ENCODE measurements at regions of chr16 and their contacts with region 1.

Region 1: GRCh38 chr16:17556276-17557052 is 85.7 kb upstream of the XYLT1 start:
- DNase-seq: no peak
- H3K4me3 ChIP-seq: no peak overlapping the region
- H3K27me3 ChIP-seq: no peaks in the 10 kb centered on the region
- CTCF ChIP-seq: peak; percentile 73

Region 2: GRCh38 chr16:17476414-17477270 is 79.8 kb before region 1 on chr16:
- CTCF ChIA-PET with region 1: interaction called, 14 read pairs
- POLR2A ChIA-PET with region 1: no interaction called
- DNase-seq: no peak
- H3K4me3 ChIP-seq: no peak overlapping the region
- H3K27me3 ChIP-seq: peaks cover 2% of the 10 kb centered on the region; the same call in 1 of the 2 replicates
- CTCF ChIP-seq: peak; percentile 72

Region 3: DNA sequence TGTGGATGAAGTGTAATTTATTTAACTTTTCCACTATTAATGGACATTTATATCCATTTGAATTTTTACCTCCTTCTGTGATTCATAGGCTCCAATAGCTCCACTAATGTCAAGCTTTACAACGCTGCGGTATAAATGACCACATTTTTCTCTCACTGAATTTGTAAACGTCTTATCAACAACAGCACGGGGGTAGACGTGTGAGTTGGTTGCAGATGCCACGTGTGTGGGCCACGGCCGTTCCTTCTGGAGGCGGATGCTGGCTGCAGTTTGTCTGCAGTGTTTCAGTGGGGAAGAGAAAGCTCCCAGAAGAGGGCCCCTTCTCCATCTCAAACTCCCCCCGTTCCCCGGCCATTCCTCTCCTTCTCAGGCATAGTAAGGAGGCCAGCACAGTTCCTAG is 17.5 kb before region 1 on chr16:
- CTCF ChIA-PET with region 1: interaction called, 17 read pairs
- POLR2A ChIA-PET with region 1: no interaction called
- DNase-seq: no peak
- H3K4me3 ChIP-seq: no peak overlapping the region
- H3K27me3 ChIP-seq: no peaks in the 10 kb centered on the region
- CTCF ChIP-seq: no peak

Region 4: DNA sequence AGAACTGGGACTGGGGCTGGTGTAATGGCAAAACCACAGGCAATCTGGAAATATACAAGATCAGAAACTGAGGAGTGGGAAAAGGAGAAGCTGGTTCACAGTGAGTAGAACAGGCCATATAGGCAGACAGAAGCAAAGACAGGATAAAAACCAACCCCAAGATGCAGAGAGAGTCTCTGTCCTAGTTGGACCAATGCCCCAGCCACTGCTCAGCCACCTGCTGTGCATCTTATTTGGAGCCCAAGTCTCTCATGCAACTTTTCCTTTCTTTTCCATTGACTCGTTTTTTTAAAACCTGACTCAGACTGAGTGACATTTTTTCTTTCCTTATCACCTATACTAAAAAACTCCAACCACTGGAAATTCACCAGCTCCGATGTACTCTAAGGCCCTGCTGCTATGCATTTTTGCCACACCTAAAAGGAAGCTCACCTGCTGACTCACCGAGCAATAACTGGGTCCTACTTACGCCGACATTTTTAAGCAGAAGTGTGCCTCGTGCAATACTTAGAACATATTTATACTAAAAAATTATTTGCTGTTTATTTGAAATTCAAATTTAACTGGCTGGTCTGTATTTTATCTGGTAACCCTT is 15.1 kb after region 1 on chr16:
- CTCF ChIA-PET with region 1: interaction called, 15 read pairs
- POLR2A ChIA-PET with region 1: no interaction called
- DNase-seq: no peak
- H3K4me3 ChIP-seq: no peak overlapping the region
- H3K27me3 ChIP-seq: 0 out of 2 replicates have a peak, but pooled peaks cover 1% of the 10 kb centered on the region
- CTCF ChIP-seq: no peak

Region 5: GRCh38 chr16:17578921-17579874 is 22.7 kb after region 1 on chr16:
- CTCF ChIA-PET with region 1: interaction called, 43 read pairs
- POLR2A ChIA-PET with region 1: no interaction called
- DNase-seq: peak; percentile 40
- H3K4me3 ChIP-seq: no peak overlapping the region
- H3K27me3 ChIP-seq: 0 out of 2 replicates have a peak, but pooled peaks cover 1% of the 10 kb centered on the region
- CTCF ChIP-seq: peak; percentile 96